ENCODE measurements at regions of chr1 and their contacts with region 1.

Region 1: DNA sequence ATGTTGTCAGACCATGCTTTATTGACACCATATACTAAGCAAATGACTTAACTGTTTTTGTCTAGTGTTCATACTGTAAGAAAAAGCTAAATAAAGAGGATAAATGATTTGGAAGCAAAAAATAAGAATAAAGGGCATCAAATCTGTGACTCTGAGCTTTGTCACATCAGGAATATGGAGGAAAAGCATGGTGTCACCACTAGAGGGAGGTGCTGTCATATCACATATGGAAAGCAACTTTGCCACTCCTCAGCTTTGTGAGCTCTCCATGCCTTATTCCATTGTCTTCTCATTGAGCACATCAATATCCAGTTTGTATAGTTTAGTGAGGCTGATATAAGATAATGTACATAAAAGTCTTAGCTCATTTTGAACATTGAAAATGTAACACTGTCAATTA is 20.8 kb upstream of the GBP1 start:
- DNase-seq: no peak
- H3K4me3 ChIP-seq: no peak overlapping the region
- CTCF ChIP-seq: peak; percentile 75

Region 2: DNA sequence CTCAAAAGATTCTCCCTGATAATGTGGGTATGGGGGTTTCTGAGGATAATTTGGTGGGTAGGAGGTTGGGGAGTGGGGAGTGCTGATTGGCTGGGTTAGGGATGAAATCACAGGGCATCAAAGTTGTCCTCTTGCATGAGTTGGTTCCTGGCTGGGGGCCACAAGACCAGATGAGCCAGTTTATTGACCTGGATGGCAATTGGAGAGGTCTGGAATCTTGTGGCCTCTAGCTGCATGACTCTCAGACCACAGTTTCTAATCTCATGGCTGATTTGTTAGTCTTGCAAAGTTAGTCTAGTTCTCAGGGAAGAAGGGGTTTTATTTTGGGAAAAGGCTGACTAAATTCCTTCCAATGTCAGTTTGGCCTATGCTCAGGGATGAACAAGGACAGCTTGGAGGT is 17.5 kb before region 1 on chr1:
- CTCF ChIA-PET with region 1: interaction called, 20 read pairs
- POLR2A ChIA-PET with region 1: no interaction called
- DNase-seq: peak; percentile 73
- H3K4me3 ChIP-seq: no peak overlapping the region
- CTCF ChIP-seq: no peak

Region 3: DNA sequence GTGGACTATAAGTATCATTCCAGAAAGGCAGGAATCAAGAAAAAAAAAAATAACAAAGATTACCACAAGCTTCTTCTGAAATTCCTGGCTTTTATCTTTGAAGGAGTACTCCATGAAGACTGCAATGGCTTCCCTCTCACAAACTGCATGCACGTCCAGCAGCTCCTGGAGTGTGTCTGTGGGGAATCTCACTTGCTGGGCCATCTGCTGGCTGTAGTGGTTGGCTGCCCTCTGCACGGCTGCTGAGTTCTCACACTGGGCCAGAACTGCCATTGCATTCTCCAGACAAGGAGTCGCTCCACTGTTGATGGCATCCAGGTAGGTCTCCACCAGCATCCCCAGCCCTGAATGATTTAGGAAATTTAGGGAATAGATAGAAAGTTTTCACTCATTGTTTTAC is 63.4 kb after region 1 on chr1:
- CTCF ChIA-PET with region 1: interaction called, 19 read pairs
- POLR2A ChIA-PET with region 1: no interaction called
- DNase-seq: no peak
- H3K4me3 ChIP-seq: no peak overlapping the region
- CTCF ChIP-seq: peak; percentile 66

Region 4: GRCh38 chr1:89358287-89358893 is 272.6 kb after region 1 on chr1:
- CTCF ChIA-PET with region 1: interaction called, 57 read pairs
- POLR2A ChIA-PET with region 1: no interaction called
- DNase-seq: no peak
- H3K4me3 ChIP-seq: no peak overlapping the region
- CTCF ChIP-seq: peak; percentile 75

Measured in AG04449 (cell line).